Right ventricle myocardium inferior (tissue), 1 donor: ENCODE measurements at regions of chrX and their contacts with region 1.

Region 1: DNA sequence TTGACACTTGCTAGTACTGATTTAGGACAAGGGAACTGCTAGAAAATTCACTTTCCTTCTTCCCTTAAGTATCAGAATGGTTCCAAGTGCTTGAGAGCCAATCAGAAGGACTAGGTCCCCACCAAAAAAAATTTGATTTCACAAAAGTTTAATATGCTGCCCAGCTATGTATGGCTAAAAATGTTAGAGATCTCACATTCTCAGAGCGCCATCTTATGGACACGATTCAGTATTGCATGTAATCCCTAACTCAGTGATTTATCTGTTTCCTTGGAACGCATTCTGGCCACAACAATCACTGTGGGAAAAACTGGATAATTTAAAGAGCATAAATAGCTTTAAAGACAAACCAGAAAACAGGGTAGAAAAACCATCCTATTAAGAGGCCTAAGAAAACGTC is 255.1 kb upstream of the GPC4 start:
- DNase-seq: no peak
- ATAC-seq: no peak

Region 2: DNA sequence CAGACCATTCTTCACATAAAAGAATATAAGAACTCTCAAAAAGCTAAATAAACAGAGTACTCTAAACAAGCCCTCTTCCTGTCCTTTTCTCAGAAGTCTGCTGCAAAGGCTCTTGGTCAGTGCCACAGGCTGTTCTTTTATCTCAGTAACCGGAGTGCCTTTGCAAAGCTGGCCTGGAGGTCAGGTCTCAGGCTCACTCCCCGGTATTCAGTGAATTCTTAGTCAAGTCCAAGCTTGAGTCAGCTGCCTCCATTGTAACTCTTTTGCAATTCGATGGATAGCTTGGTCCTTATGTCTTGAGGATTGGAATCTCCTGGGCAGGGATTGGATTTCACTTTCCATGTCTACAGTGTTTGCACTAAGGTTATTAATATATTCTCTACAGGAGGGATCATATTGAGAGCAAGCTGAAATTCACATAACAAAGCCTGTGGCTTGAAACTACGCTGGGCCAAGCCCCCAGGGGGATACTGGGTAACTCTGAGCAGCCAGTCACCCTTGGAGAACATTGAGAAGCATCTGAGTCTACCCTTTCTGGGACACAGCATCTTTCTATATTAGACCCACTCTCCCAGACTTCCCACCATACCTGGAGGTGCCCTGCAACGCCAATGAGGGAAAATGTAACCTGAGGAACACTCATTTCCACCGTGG is 702.0 kb before region 1 on chrX:
- intact Hi-C with region 1: loop called (anchors 10 kb)
- DNase-seq: no peak
- ATAC-seq: no peak

Region 3: GRCh38 chrX:133325422-133325821 is 345.0 kb before region 1 on chrX:
- intact Hi-C with region 1: loop called (anchors 5 kb)
- DNase-seq: no peak
- ATAC-seq: no peak

Region 4: DNA sequence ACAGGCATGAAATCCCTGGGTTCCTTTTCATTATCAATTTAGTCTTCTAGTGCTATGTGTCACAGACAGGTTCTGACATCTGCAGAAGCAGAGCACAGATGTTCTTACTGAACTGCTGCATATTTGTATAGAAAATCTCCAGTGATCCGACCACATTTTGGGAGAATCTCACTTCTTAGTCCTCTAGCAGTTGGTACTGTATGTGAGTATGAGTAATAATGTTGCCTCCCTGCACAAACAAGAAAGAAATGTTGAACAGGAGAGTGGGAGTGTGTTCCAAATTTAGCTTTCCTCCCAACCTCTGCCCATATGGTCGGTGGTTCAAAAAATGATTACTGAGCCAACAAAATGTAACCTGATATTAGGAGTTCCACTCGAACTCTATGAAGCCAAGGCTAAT is 89.8 kb before region 1 on chrX:
- intact Hi-C with region 1: no loop called
- DNase-seq: no peak
- ATAC-seq: no peak

Region 5: GRCh38 chrX:133776072-133776471 is 105.7 kb after region 1 on chrX:
- intact Hi-C with region 1: no loop called
- DNase-seq: no peak
- ATAC-seq: no peak

Region 6: GRCh38 chrX:133880032-133880443 is 209.7 kb after region 1 on chrX:
- intact Hi-C with region 1: no loop called
- DNase-seq: no peak
- ATAC-seq: no peak